IMR-90 (cell line): ENCODE measurements at regions of chr2 and their contacts with region 1.

Region 1: GRCh38 chr2:144071461-144071860 is 448.5 kb downstream of the ZEB2 start:
- DNase-seq: peak; percentile 81
- ATAC-seq: peak; percentile 75
- H3K4me3 ChIP-seq: no peak overlapping the region
- H3K27ac ChIP-seq: no peak overlapping the region
- H3K4me1 ChIP-seq: no peaks in the 10 kb centered on the region
- H3K27me3 ChIP-seq: no peaks in the 10 kb centered on the region
- CTCF ChIP-seq: peak; percentile 64
- POLR2A ChIP-seq: no peak
- RAD21 ChIP-seq: peak; percentile 70

Region 2: DNA sequence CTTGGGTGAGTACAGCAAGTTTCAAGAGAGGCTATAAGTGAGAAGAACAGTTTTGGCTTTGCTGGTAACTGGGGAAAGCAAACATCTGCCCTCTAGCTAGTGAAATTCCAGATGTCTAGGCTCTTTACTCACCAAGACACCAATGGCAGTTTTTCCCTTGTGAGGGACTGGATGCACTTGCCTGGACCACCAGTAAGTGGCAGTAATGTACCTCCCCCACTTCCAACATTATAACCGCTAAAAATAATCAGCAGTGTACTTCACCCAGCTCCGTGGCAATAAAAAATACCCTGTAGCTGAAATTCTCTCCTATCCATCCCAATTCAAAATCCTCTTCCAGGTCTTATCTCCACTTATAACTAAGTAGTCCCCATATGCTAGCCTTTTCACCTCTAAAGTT is 558.4 kb before region 1 on chr2:
- CTCF ChIA-PET with region 1: interaction called, 3 read pairs
- POLR2A ChIA-PET with region 1: no interaction called
- dilution Hi-C with region 1: no loop called
- in situ Hi-C with region 1: no loop called
- intact Hi-C with region 1: loop called (anchors 5 kb)
- DNase-seq: peak; percentile 75
- ATAC-seq: peak; percentile 100
- H3K4me3 ChIP-seq: no peak overlapping the region
- H3K27ac ChIP-seq: no peak overlapping the region
- H3K4me1 ChIP-seq: no peaks in the 10 kb centered on the region; the same call in 1 of the 2 replicates
- H3K27me3 ChIP-seq: no peaks in the 10 kb centered on the region
- CTCF ChIP-seq: peak; percentile 84
- POLR2A ChIP-seq: no peak
- RAD21 ChIP-seq: peak; percentile 90

Region 3: GRCh38 chr2:143582046-143582747 is 489.3 kb before region 1 on chr2:
- CTCF ChIA-PET with region 1: no interaction called
- POLR2A ChIA-PET with region 1: no interaction called
- dilution Hi-C with region 1: no loop called
- in situ Hi-C with region 1: no loop called
- intact Hi-C with region 1: loop called (anchors 5 kb)
- DNase-seq: peak; percentile 52
- ATAC-seq: peak; percentile 85
- H3K4me3 ChIP-seq: no peak overlapping the region
- H3K27ac ChIP-seq: no peak overlapping the region
- H3K4me1 ChIP-seq: no peaks in the 10 kb centered on the region; the same call in 1 of the 2 replicates
- H3K27me3 ChIP-seq: no peaks in the 10 kb centered on the region
- CTCF ChIP-seq: peak; percentile 55
- POLR2A ChIP-seq: no peak
- RAD21 ChIP-seq: peak; percentile 63

Region 4: GRCh38 chr2:143954186-143954585 is 117.3 kb before region 1 on chr2:
- CTCF ChIA-PET with region 1: no interaction called
- POLR2A ChIA-PET with region 1: no interaction called
- dilution Hi-C with region 1: no loop called
- in situ Hi-C with region 1: no loop called
- intact Hi-C with region 1: loop called (anchors 5 kb)
- DNase-seq: peak; percentile 48
- ATAC-seq: no peak
- H3K4me3 ChIP-seq: no peak overlapping the region
- H3K27ac ChIP-seq: no peak overlapping the region
- H3K4me1 ChIP-seq: peaks cover 4% of the 10 kb centered on the region
- H3K27me3 ChIP-seq: no peaks in the 10 kb centered on the region
- CTCF ChIP-seq: no peak
- POLR2A ChIP-seq: no peak
- RAD21 ChIP-seq: no peak